ENCODE measurements at regions of chr12 and their contacts with region 1.

Region 1: DNA sequence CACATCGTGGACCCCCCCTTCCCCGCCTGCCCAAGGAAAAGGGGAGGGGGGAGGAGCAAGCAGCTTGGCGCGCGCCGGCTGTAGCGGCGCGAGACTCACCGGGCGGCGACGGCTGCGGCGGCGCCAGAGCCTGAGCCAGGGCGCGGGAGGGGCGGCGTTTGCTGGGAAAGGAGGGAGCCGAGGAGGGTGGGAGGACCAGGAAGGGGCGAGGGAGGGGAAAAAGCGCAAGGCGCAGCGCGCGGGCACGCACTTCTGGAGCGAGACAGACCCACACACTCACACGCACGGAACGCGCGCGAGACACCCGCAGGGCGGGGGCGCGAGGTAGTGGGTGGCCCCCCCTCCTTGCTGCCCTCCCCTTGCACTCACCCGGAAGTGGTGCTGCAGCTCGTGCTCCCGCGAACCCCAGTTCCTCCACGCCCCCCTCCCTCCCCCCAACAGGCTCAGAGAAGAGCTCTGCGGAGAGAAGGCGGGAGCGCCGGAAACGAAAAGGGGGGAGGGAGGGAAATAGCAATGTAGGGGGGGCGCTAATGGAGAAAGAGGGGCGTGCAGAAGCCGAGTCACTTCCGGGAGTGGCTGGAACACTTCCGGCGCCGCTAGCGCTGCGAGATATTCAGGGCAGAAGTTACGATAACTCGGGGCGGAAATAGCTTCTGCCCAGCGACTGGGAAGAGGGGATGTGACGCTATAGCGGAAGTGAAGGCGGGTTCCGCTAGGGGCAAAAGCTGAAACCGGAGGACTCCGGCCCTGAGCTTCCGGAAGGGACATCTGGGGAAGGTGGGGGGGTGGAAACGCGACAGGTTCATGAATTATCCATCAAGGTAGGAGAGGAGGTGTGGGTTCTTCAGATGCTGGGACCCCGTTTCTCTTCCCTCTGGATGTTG is at the start of gene ZNF384:
- H3K4me3 ChIP-seq: peak within 1 kb of the TSS; percentile 73
- H3K27ac ChIP-seq: peak within 1 kb of the TSS; percentile 99
- H3K4me1 ChIP-seq: peaks cover 13% of the 10 kb centered on the region
- CTCF ChIP-seq: peak; percentile 69; the same call in 1 of the 2 replicates

Region 2: DNA sequence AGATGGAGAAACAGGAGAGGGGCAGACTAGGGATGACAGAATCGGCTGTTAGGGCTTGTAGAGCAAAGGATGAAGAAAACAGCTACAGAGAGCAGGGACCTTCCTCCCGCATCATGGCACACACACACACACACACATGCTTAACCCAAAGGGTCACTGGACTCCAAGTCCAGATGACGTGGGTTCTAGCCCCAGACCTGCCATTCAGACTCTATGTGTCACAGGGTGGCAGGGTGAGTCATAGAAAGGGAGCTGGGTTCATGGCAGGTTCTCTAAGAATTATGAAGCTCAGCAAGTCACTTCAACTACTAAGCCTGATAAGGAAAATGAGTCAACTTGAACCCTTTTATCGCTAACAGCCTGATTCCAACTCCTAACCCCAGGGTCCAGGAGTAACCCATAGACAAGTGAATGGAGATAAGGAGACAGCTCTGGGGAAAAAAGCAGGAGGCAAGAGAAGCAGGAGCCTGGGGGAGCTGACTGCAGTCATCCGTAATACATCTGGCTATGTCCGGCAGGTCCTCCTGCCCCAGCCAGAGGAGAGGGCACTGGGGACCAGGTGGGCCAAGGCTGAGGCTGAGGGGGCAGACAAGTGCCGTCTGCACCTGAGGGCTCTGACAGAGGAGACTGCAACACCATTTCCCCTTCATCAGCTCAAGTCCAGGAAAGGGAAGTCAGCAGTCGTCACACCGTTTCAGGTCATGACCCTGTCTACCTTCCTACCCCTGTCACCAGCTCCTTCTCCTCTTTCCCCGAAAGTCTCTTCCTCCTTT is 343.7 kb before region 1 on chr12:
- CTCF ChIA-PET with region 1: no interaction called
- POLR2A ChIA-PET with region 1: no interaction called
- H3K4me3 ChIP-seq: no peak overlapping the region
- H3K27ac ChIP-seq: no peak overlapping the region
- H3K4me1 ChIP-seq: peaks cover 2% of the 10 kb centered on the region; the same call in 1 of the 2 replicates
- CTCF ChIP-seq: no peak

Region 3: DNA sequence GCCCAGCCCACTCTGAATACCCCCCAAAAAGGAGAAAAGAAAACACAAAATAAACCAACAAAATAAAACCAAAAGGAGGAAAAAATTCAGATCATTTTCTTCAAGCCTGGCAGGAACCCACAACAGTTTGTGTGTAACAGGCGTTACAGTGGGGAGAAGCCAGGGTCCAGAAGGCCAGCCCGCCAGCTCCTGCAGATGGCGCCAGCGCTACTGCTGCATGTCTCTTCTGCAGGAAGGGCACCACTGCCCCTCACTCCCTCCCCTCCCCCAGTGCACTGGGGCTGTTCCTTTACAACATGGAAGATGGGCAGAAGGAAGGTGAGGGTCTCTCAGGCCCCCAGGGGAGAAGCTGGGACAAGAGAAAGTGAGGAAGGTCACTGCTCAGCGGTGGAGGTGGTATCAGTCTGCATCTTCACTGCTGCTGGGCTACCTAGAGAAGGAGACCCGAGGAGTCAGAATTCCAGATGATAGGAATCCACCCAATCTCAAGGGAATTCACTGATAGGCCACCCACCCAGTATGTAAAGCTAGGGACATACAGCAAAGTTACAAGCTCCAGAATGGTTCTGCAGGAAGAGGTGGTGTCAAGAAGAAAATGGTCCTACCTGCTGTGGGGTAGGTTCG is 118.9 kb before region 1 on chr12:
- CTCF ChIA-PET with region 1: interaction called, 5 read pairs
- POLR2A ChIA-PET with region 1: interaction called, 11 read pairs
- H3K4me3 ChIP-seq: no peak overlapping the region
- H3K27ac ChIP-seq: 0 out of 2 replicates have a peak overlapping the region, but pooled peaks have one; percentile 22
- H3K4me1 ChIP-seq: peaks cover 2% of the 10 kb centered on the region; the same call in 1 of the 2 replicates
- CTCF ChIP-seq: peak; percentile 70

Region 4: GRCh38 chr12:6613776-6614512 is 75.3 kb before region 1 on chr12:
- CTCF ChIA-PET with region 1: interaction called, 8 read pairs
- POLR2A ChIA-PET with region 1: interaction called, 30 read pairs
- H3K4me3 ChIP-seq: no peak overlapping the region
- H3K27ac ChIP-seq: peak overlapping the region; percentile 79
- H3K4me1 ChIP-seq: peaks cover 14% of the 10 kb centered on the region
- CTCF ChIP-seq: peak; percentile 87

Region 5: GRCh38 chr12:6662906-6663742 is 26.1 kb before region 1 on chr12 and contains the start of gene ING4:
- CTCF ChIA-PET with region 1: interaction called, 27 read pairs
- POLR2A ChIA-PET with region 1: interaction called, 25 read pairs
- H3K4me3 ChIP-seq: peak within 1 kb of the TSS; percentile 76
- H3K27ac ChIP-seq: peak within 1 kb of the TSS; percentile 70
- H3K4me1 ChIP-seq: peaks cover 7% of the 10 kb centered on the region; the same call in 1 of the 2 replicates
- CTCF ChIP-seq: no peak

Region 6: GRCh38 chr12:6672143-6672542 is 17.1 kb before region 1 on chr12:
- CTCF ChIA-PET with region 1: interaction called, 26 read pairs
- POLR2A ChIA-PET with region 1: interaction called, 11 read pairs
- H3K4me3 ChIP-seq: no peak overlapping the region
- H3K27ac ChIP-seq: no peak overlapping the region
- H3K4me1 ChIP-seq: no peaks in the 10 kb centered on the region
- CTCF ChIP-seq: no peak

Region 7: GRCh38 chr12:6723607-6724396 is 34.6 kb after region 1 on chr12 and contains the start of gene COPS7A:
- CTCF ChIA-PET with region 1: interaction called, 4 read pairs
- POLR2A ChIA-PET with region 1: interaction called, 104 read pairs
- H3K4me3 ChIP-seq: peak within 1 kb of the TSS; percentile 58
- H3K27ac ChIP-seq: peak within 1 kb of the TSS; percentile 81
- H3K4me1 ChIP-seq: peaks cover 11% of the 10 kb centered on the region
- CTCF ChIP-seq: peak; percentile 63; the same call in 1 of the 2 replicates

Region 8: GRCh38 chr12:6851921-6852650 is 162.8 kb after region 1 on chr12 and contains the start of gene USP5:
- CTCF ChIA-PET with region 1: no interaction called
- POLR2A ChIA-PET with region 1: interaction called, 18 read pairs
- H3K4me3 ChIP-seq: peak within 1 kb of the TSS; percentile 76
- H3K27ac ChIP-seq: peak within 1 kb of the TSS; percentile 58
- H3K4me1 ChIP-seq: peaks cover 11% of the 10 kb centered on the region
- CTCF ChIP-seq: peak; percentile 70